Common myeloid progenitor, CD34-positive (primary cell): ENCODE measurements at regions of chr12 and their contacts with region 1.

Region 1: DNA sequence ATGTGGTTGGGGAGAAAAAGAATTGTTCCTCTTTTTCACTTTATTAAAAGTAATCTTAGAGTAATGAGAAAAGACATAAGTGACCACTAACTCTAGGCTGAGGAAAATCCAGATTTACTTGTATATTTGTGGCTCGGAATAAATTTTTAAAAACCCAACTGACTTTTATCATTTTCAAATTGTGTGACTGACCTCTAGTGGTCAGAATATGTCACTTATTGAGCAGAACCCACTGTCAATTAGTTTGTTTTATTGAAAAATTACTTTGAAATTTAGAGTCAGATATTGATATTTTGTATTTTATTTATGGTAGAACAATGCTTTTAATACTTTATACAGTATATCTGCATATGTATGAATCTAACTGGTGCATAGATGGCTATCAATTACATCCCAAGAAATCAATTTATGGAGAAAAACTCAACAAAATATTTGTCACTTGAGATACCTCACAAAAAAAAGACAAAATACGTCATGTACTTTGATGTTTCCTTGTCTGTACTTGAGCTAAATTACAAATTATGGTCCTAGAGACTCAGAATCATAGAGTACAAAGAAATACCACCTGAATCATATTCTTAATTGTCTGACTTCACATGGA is 229.4 kb downstream of the CNTN1 start:
- DNase-seq: peak; percentile 17 to 51 (median 42)
- H3K4me3 ChIP-seq: no peak overlapping the region
- H3K27ac ChIP-seq: no peak overlapping the region
- H3K4me1 ChIP-seq: peaks cover 0 to 2% (median 0%) of the 10 kb centered on the region in 4 experiments
- H3K27me3 ChIP-seq: peaks cover 0 to 2% (median 0%) of the 10 kb centered on the region in 5 experiments

Region 2: DNA sequence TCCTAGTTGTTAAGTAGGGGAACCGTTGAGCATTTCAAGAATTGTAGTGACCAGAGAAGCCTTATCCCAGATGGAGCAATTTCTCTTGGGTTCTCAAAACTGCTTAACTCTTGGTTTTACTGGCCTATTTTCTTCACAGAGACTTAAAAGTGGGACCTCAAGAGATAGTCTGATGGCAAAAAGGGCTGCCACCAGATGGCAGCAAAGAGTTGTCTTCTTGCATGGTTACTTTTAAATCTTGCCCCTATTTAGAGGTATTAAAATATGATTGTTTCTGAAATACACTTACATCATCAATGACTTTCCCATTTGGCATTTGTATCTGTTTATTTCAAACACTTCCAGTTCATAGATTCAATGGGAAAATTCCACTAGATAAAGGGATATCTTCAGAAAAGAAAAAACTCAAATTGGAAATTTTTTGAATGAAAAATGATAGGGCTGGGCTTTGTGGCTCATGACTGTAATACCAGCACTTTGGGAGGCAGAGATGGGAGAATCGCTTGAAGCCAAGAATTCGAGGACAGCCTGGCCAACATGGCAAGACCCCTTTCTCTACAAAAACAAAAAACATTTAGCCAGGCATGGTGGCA is 299.3 kb before region 1 on chr12:
- CTCF ChIA-PET with region 1: interaction called, 23 read pairs
- POLR2A ChIA-PET with region 1: no interaction called
- DNase-seq: peak; percentile 47 to 76 (median 61)
- H3K4me3 ChIP-seq: no peak overlapping the region
- H3K27ac ChIP-seq: no peak overlapping the region
- H3K4me1 ChIP-seq: no peaks in the 10 kb centered on the region
- H3K27me3 ChIP-seq: peaks cover 0 to 2% (median 0%) of the 10 kb centered on the region in 5 experiments

Region 3: DNA sequence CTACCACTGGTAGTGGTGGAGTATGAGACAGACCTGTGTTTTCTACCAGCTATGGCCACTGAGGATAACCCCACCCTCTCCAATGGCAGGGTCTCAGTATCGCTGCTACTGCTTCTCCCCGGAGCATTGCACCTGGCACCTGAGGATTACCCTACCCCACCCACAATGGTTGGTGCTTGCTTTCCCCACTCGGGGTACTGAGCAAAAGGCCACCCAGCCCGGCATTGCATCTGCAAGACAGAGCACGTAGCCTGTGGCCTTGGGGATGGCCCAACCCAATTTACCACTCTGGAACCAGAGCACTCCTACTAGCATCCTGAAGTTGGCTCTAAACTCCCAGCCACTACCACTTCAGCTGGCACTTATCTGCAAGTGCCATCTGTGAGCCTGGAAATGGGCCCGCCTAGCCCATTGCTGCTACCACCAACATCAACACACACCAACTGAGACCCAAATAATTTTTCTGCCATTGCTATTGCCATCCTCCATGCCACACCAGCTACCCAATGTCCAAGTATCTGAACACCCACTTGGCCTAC is 83.7 kb before region 1 on chr12:
- CTCF ChIA-PET with region 1: no interaction called
- POLR2A ChIA-PET with region 1: no interaction called
- DNase-seq: no peak
- H3K4me3 ChIP-seq: no peak overlapping the region
- H3K27ac ChIP-seq: no peak overlapping the region
- H3K4me1 ChIP-seq: no peaks in the 10 kb centered on the region
- H3K27me3 ChIP-seq: no peaks in the 10 kb centered on the region